ENCODE measurements at regions of chr7 and their contacts with region 1.

Region 1: GRCh38 chr7:104231054-104232046 is 23.5 kb upstream of the ORC5 start:
- H3K4me3 ChIP-seq: no peak overlapping the region
- H3K27ac ChIP-seq: no peak overlapping the region
- H3K4me1 ChIP-seq: no peaks in the 10 kb centered on the region
- CTCF ChIP-seq: peak; percentile 50; the same call in 1 of the 2 replicates

Region 2: DNA sequence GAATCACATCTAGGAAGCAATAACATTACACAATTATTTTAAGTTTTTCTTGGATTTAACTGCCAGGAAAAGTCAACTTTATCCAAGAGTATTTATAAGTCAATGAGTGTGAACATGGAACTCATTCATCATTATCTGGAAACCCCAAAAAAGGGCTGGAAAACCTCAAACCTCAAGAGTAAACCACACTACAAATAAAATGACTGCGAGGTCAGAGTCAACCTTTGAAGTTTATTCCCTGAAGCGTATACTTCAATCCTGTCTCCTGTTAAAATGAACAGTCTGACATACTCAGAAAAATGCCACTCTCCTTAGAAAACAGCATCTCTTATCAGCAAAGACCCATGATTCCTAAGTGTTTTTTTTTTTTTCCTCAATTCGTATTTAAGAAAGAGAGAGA is 328.4 kb before region 1 on chr7:
- CTCF ChIA-PET with region 1: no interaction called
- POLR2A ChIA-PET with region 1: no interaction called
- H3K4me3 ChIP-seq: no peak overlapping the region
- H3K27ac ChIP-seq: no peak overlapping the region
- H3K4me1 ChIP-seq: no peaks in the 10 kb centered on the region
- CTCF ChIP-seq: no peak

Region 3: DNA sequence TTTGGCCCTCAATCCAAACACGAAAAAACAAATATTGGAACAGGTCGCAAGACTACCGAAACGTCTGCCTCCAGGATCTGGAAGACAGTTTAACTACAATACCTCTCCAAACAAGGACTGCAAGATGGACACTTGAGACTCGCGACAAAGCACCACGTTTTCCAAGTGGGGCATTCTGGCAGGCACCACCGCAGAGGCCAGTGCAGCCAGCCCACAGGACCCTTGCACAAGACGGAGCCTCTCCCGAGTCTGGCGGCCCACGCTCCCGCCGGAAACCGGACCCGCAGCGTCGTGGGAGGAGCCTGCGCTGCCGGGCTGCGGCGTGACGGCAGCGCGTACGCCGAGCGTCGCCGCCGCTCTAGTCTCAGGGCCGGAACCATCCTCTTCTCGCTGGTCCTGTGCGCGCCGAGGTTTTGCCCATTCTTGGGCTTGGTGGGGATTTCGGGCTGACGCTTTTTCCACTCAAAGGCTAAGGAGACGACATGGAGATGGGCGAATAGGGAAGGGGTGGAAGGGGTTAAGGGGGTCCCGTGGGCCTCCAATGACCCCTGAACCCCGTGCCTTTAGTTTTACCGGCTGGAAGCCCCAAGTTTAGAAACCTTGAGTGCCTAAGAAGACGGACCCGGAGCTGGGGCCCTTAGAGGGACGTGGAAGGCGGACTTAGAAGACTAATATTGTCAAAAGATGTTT is 23.5 kb before region 1 on chr7 and contains the start of gene ORC5:
- CTCF ChIA-PET with region 1: no interaction called
- POLR2A ChIA-PET with region 1: no interaction called
- H3K4me3 ChIP-seq: peak within 1 kb of the TSS; percentile 85
- H3K27ac ChIP-seq: peak within 1 kb of the TSS; percentile 55; the same call in 1 of the 2 replicates
- H3K4me1 ChIP-seq: peaks cover 7% of the 10 kb centered on the region; the same call in 1 of the 2 replicates
- CTCF ChIP-seq: no peak

Region 4: DNA sequence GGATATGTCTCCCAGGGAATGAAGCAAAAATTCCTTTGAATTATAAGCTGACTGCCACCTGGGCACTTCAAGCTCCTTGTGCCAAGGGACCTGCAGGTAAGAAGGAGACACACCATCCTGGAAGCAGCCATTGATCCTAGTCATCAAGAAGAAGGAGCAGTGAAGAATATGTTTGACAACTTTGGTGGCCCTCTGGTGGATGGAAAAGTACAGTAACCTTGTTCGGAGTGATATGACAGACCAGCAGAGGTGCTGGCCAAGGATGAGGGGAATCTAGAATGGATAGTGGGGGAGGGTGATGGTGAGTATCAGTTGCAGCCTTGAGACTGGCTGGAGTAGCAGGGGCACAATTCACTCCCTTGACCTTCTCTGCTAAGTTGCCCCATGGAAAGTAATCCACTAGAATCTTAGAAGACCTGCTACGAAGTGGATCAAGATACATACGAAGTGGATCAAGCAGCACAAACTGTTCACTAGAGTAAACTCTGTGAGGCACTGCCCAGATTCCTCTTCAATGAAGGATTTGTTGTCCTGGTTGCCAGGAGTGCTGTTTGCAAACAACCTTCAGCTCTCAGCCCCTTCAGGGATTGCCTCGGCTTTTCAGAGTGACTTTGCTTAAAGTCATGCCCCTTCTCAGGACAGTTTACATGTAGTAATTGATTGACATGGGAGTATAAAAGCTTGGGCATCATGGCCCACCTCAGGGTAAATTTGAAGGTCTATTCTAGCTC is 21.2 kb after region 1 on chr7:
- CTCF ChIA-PET with region 1: interaction called, 20 read pairs
- POLR2A ChIA-PET with region 1: no interaction called
- H3K4me3 ChIP-seq: no peak overlapping the region
- H3K27ac ChIP-seq: no peak overlapping the region
- H3K4me1 ChIP-seq: no peaks in the 10 kb centered on the region
- CTCF ChIP-seq: no peak

Region 5: GRCh38 chr7:104267701-104268368 is 36.5 kb after region 1 on chr7:
- CTCF ChIA-PET with region 1: interaction called, 23 read pairs
- POLR2A ChIA-PET with region 1: no interaction called
- H3K4me3 ChIP-seq: no peak overlapping the region
- H3K27ac ChIP-seq: no peak overlapping the region
- H3K4me1 ChIP-seq: no peaks in the 10 kb centered on the region
- CTCF ChIP-seq: no peak

Measured in HEK293 (cell line).